B cell (primary cell): ENCODE measurements at regions of chr6 and their contacts with region 1.

Region 1: GRCh38 chr6:37559501-37559900 is 59.8 kb upstream of the CCDC167 start:
- DNase-seq: no peak
- ATAC-seq: no peak
- H3K4me3 ChIP-seq: no peak overlapping the region
- H3K4me3 Mint-ChIP-seq: peak overlapping the region; percentile 2
- H3K27ac ChIP-seq: peak overlapping the region; percentile 37 to 94
- H3K27ac Mint-ChIP-seq: peak overlapping the region; percentile 57
- H3K4me1 ChIP-seq: peaks cover 99 to 100% of the 10 kb centered on the region in 2 donors
- H3K4me1 Mint-ChIP-seq: peaks cover 100% of the 10 kb centered on the region
- H3K27me3 ChIP-seq: no peaks in the 10 kb centered on the region
- H3K27me3 Mint-ChIP-seq: no peaks in the 10 kb centered on the region
- CTCF ChIP-seq: no peak

Region 2: GRCh38 chr6:36769676-36770499 is 789.6 kb before region 1 on chr6:
- CTCF ChIA-PET with region 1: no interaction called
- POLR2A ChIA-PET with region 1: no interaction called
- intact Hi-C with region 1: no loop called
- DNase-seq: peak; percentile 51
- ATAC-seq: no peak
- H3K4me3 ChIP-seq: no peak overlapping the region
- H3K4me3 Mint-ChIP-seq: peak overlapping the region; percentile 39
- H3K27ac ChIP-seq: no peak overlapping the region
- H3K27ac Mint-ChIP-seq: peak overlapping the region; percentile 59
- H3K4me1 ChIP-seq: peaks cover 45 to 52% of the 10 kb centered on the region in 2 donors
- H3K4me1 Mint-ChIP-seq: peaks cover 40% of the 10 kb centered on the region
- H3K27me3 ChIP-seq: peaks cover 0 to 3% (median 0%) of the 10 kb centered on the region in 4 experiments
- H3K27me3 Mint-ChIP-seq: peaks cover 10% of the 10 kb centered on the region
- CTCF ChIP-seq: no peak

Region 3: GRCh38 chr6:37576336-37576813 is 16.9 kb after region 1 on chr6:
- CTCF ChIA-PET with region 1: no interaction called
- POLR2A ChIA-PET with region 1: interaction called, 16 read pairs
- intact Hi-C with region 1: no loop called
- DNase-seq: no peak
- ATAC-seq: no peak
- H3K4me3 ChIP-seq: no peak overlapping the region
- H3K4me3 Mint-ChIP-seq: no peak overlapping the region
- H3K27ac ChIP-seq: no peak overlapping the region
- H3K27ac Mint-ChIP-seq: no peak overlapping the region
- H3K4me1 ChIP-seq: no peaks in the 10 kb centered on the region
- H3K4me1 Mint-ChIP-seq: peaks cover 2% of the 10 kb centered on the region
- H3K27me3 ChIP-seq: peaks cover 0 to 3% (median 0%) of the 10 kb centered on the region in 4 experiments
- H3K27me3 Mint-ChIP-seq: no peaks in the 10 kb centered on the region
- CTCF ChIP-seq: no peak